ENCODE measurements at regions of chr2 and their contacts with region 1.

Region 1: GRCh38 chr2:170341684-170342623 is 164.0 kb downstream of the MYO3B start:
- DNase-seq: no peak
- ATAC-seq: no peak
- H3K4me3 ChIP-seq: no peak overlapping the region
- H3K27ac ChIP-seq: no peak overlapping the region
- H3K4me1 ChIP-seq: no peaks in the 10 kb centered on the region
- H3K27me3 ChIP-seq: peaks cover 4% of the 10 kb centered on the region; the same call in 1 of the 2 replicates
- CTCF ChIP-seq: no peak

Region 2: GRCh38 chr2:168935810-168936581 is 1406.0 kb before region 1 on chr2:
- CTCF ChIA-PET with region 1: no interaction called
- POLR2A ChIA-PET with region 1: no interaction called
- in situ Hi-C with region 1: no loop called
- intact Hi-C with region 1: no loop called
- DNase-seq: no peak
- ATAC-seq: no peak
- H3K4me3 ChIP-seq: no peak overlapping the region
- H3K27ac ChIP-seq: no peak overlapping the region
- H3K4me1 ChIP-seq: no peaks in the 10 kb centered on the region
- H3K27me3 ChIP-seq: 0 out of 2 replicates have a peak, but pooled peaks cover 4% of the 10 kb centered on the region
- CTCF ChIP-seq: no peak

Region 3: GRCh38 chr2:170298115-170298514 is 43.8 kb before region 1 on chr2:
- CTCF ChIA-PET with region 1: no interaction called
- POLR2A ChIA-PET with region 1: interaction called, 14 read pairs
- in situ Hi-C with region 1: no loop called
- intact Hi-C with region 1: no loop called
- DNase-seq: no peak
- ATAC-seq: no peak
- H3K4me3 ChIP-seq: no peak overlapping the region
- H3K27ac ChIP-seq: no peak overlapping the region
- H3K4me1 ChIP-seq: no peaks in the 10 kb centered on the region
- H3K27me3 ChIP-seq: no peaks in the 10 kb centered on the region
- CTCF ChIP-seq: no peak